Dorsolateral prefrontal cortex (tissue), 120 donors: ENCODE measurements at regions of chr16 and their contacts with region 1.

Region 1: GRCh38 chr16:69796351-69797118 is 34.4 kb downstream of the WWP2 start:
- DNase-seq: peak in 3 of 10 donors; percentile 16 to 62 (median 37)
- H3K4me3 ChIP-seq: peak overlapping the region in 57 of 59 donors; percentile 9 to 63 (median 48)
- H3K27ac ChIP-seq: peak overlapping the region in 46 of 59 donors; percentile 0 to 85 (median 46)
- H3K27me3 ChIP-seq: no peaks in the 10 kb centered on the region
- CTCF ChIP-seq: peak; percentile 88 to 100 (median 96)

Region 2: GRCh38 chr16:69417520-69418199 is 378.9 kb before region 1 on chr16:
- intact Hi-C with region 1: no loop called
- DNase-seq: peak in 2 of 10 donors; percentile 21 to 50
- H3K4me3 ChIP-seq: no peak overlapping the region
- H3K27ac ChIP-seq: peak overlapping the region in 48 of 59 donors; percentile 3 to 81 (median 56)
- H3K27me3 ChIP-seq: no peaks in the 10 kb centered on the region
- CTCF ChIP-seq: no peak

Region 3: GRCh38 chr16:69781118-69781517 is 15.4 kb before region 1 on chr16:
- intact Hi-C with region 1: no loop called
- DNase-seq: no peak
- H3K4me3 ChIP-seq: no peak overlapping the region
- H3K27ac ChIP-seq: no peak overlapping the region
- H3K27me3 ChIP-seq: no peaks in the 10 kb centered on the region
- CTCF ChIP-seq: no peak

Region 4: DNA sequence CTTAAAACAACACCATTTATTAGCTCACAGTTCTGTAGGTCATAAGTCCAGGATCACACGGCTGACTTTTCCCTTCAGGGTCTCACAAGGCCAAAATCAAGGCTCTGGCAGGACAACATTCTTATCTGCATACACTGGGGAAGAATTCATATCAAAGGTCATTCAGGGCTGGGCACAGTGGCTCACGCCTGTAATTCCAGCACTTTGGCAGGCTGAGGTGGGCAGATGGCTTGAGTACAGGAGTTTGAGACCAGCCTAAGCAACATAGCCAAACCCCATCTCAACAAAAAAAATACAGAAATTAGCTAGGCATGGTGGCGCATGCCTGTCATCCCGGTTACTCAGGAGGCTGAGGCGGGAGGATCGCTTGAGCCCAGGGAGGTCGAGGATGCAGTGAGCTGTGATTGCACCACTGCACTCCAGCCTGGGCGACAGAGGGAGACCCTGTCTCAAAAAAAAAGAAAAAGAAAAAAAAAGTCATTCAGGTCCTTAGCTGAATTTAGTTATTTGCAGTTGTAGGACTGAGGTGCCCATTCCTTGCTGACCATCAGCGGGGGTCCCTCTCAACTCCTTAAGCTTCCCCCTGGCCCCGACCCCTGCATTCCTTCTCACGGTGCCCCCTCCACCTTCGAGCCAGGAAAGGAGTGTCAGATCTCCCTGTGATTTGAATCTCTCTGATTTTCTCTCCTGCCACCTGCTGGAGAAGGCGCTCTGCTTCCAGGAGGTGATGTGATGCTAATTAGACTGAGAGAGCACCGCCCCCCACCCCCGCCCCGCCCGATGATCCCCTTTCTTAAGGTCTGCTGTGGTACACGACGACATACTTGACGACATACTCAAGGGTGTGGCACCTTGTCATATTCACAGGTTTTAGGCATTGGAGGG is 62.8 kb after region 1 on chr16:
- intact Hi-C with region 1: loop called in 1 of 2 experiments (anchors 1 kb)
- DNase-seq: peak in 4 of 10 donors; percentile 36 to 67 (median 60)
- H3K4me3 ChIP-seq: no peak overlapping the region
- H3K27ac ChIP-seq: peak overlapping the region in 38 of 59 donors; percentile 9 to 83 (median 56)
- H3K27me3 ChIP-seq: no peaks in the 10 kb centered on the region
- CTCF ChIP-seq: peak in 54 of 56 donors; percentile 26 to 73 (median 46)

Region 5: GRCh38 chr16:69930117-69930776 is 133.7 kb after region 1 on chr16:
- intact Hi-C with region 1: loop called in 1 of 2 experiments (anchors 2 kb)
- DNase-seq: peak in 2 of 10 donors; percentile 37 to 46
- H3K4me3 ChIP-seq: no peak overlapping the region
- H3K27ac ChIP-seq: peak overlapping the region in 41 of 59 donors; percentile 7 to 95 (median 58)
- H3K27me3 ChIP-seq: no peaks in the 10 kb centered on the region
- CTCF ChIP-seq: peak; percentile 44 to 84 (median 73)

Region 6: GRCh38 chr16:69937465-69937951 is 141.0 kb after region 1 on chr16:
- intact Hi-C with region 1: loop called in 1 of 2 experiments (anchors 1 kb)
- DNase-seq: peak in 9 of 10 donors; percentile 62 to 79 (median 77)
- H3K4me3 ChIP-seq: no peak overlapping the region
- H3K27ac ChIP-seq: peak overlapping the region in 36 of 59 donors; percentile 3 to 77 (median 40)
- H3K27me3 ChIP-seq: no peaks in the 10 kb centered on the region
- CTCF ChIP-seq: peak in 55 of 56 donors; percentile 36 to 81 (median 70)